HCT116 (cell line): ENCODE measurements at regions of chr18 and their contacts with region 1.

Region 1: DNA sequence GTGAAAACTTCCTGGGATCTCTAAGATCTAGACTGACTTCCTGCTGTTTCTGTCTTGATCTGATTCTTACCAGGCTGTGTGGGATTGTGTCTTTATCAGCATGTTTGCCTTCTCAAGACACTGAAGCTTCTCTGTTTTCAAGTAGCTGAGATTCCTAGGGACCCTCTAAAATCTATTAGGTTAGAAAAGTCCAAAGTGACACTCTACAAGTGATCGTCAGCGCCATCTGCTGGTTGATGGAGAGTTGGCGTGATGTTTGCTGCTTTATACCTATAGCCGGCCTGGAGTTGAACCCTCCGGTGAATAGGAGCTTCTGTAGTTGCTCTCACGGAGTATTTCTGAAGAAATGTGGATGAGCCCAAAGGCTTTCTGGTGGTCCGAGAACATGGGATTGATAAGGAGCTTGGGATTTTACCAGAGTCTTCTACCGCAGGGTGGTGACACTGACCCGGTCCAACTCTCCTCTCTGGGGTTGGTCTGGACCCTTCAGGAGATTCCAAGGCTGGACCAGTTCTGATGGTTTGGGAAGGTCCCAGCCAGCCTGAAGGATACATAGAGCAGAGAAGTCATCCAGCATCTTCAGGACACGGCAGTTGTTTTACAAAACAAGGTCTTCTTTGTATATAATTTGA is 96.0 kb upstream of the TTC39C start:
- DNase-seq: peak; percentile 42
- ATAC-seq: peak; percentile 94
- H3K4me3 ChIP-seq: no peak overlapping the region
- H3K27ac ChIP-seq: no peak overlapping the region
- H3K4me1 ChIP-seq: no peaks in the 10 kb centered on the region
- H3K27me3 ChIP-seq: no peaks in the 10 kb centered on the region
- CTCF ChIP-seq: peak; percentile 72 to 90 (median 86); a peak in 5 of 6 replicates
- POLR2A ChIP-seq: no peak
- RAD21 ChIP-seq: peak; percentile 84

Region 2: DNA sequence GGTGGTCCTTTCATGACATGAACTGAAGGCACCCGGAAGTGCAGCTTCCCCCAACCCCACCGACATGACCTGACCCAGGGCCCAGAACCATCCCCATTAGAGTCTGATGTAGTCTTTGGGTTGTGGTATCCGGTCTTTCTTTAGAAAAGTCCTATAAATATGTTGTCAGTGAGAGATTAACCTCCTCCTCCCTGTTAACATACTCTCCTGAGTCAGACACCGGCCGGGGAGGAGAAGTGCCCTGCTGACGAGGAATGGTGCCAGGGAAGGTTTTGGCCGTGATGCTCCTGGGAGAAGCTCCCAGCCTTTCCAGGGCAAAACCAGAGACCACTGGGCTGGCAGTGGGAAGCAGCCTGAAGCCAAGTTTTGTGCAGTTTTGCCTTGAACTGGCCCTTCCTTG is 120.3 kb before region 1 on chr18:
- CTCF ChIA-PET with region 1: no interaction called
- POLR2A ChIA-PET with region 1: no interaction called
- RAD21 ChIA-PET with region 1: no interaction called
- intact Hi-C with region 1: no loop called
- DNase-seq: no peak
- ATAC-seq: no peak
- H3K4me3 ChIP-seq: no peak overlapping the region
- H3K27ac ChIP-seq: no peak overlapping the region
- H3K4me1 ChIP-seq: no peaks in the 10 kb centered on the region
- H3K27me3 ChIP-seq: no peaks in the 10 kb centered on the region
- CTCF ChIP-seq: no peak
- POLR2A ChIP-seq: no peak
- RAD21 ChIP-seq: no peak

Region 3: DNA sequence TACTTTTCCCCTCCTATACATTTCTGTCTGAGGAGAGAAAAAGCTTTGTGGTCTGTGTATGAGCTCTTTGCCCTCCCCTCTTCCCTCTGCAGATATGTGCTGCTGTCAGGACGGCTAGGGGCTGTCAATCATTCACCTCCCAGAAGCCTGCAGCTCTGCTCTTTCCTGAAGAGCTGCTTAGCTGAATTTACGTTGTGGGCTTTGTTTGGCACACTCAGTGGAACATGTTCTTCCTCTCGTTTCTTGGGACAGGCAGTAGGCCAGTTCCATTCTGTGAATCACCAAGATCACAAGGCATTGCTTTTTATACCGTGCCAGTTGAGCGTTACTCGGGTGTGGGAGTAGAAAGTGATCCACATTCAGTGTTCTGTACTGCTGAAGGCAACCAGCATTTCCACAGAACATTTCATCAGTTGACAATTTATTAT is 92.5 kb before region 1 on chr18:
- CTCF ChIA-PET with region 1: no interaction called
- POLR2A ChIA-PET with region 1: no interaction called
- RAD21 ChIA-PET with region 1: no interaction called
- intact Hi-C with region 1: loop called (anchors 2 kb)
- DNase-seq: no peak
- ATAC-seq: no peak
- H3K4me3 ChIP-seq: no peak overlapping the region
- H3K27ac ChIP-seq: no peak overlapping the region
- H3K4me1 ChIP-seq: peaks cover 2 to 14% of the 10 kb centered on the region in 2 experiments; a peak in 3 of 4 replicates
- H3K27me3 ChIP-seq: no peaks in the 10 kb centered on the region
- CTCF ChIP-seq: no peak
- POLR2A ChIP-seq: no peak
- RAD21 ChIP-seq: no peak

Region 4: GRCh38 chr18:24051031-24051947 is 132.8 kb after region 1 on chr18:
- CTCF ChIA-PET with region 1: no interaction called
- POLR2A ChIA-PET with region 1: no interaction called
- RAD21 ChIA-PET with region 1: no interaction called
- intact Hi-C with region 1: no loop called
- DNase-seq: no peak
- ATAC-seq: peak; percentile 67
- H3K4me3 ChIP-seq: no peak overlapping the region
- H3K27ac ChIP-seq: no peak overlapping the region
- H3K4me1 ChIP-seq: peaks cover 16 to 17% of the 10 kb centered on the region in 2 experiments
- H3K27me3 ChIP-seq: no peaks in the 10 kb centered on the region
- CTCF ChIP-seq: no peak
- POLR2A ChIP-seq: no peak
- RAD21 ChIP-seq: no peak